CD4-positive, alpha-beta memory T cell (primary cell): ENCODE measurements at regions of chr1 and their contacts with region 1.

Region 1: GRCh38 chr1:52141513-52142219 is at the start of gene ZFYVE9:
- DNase-seq: peak; percentile 61 to 76 (median 70)
- H3K4me3 ChIP-seq: peak within 1 kb of the TSS in 1 of 2 donors; percentile 55
- H3K4me3 Mint-ChIP-seq: peak within 1 kb of the TSS; percentile 87 to 94 (median 91)
- H3K27ac ChIP-seq: peak within 1 kb of the TSS; percentile 58
- H3K27ac Mint-ChIP-seq: peak within 1 kb of the TSS; percentile 53 to 94 (median 86)
- H3K4me1 ChIP-seq: peaks cover 43% of the 10 kb centered on the region
- H3K4me1 Mint-ChIP-seq: peaks cover 32 to 40% (median 35%) of the 10 kb centered on the region in 4 donors
- H3K27me3 ChIP-seq: no peaks in the 10 kb centered on the region
- H3K27me3 Mint-ChIP-seq: no peaks in the 10 kb centered on the region
- total RNA-seq, gene ZFYVE9: 11.0 to 12.8 TPM

Region 2: GRCh38 chr1:52056163-52056936 is 85.3 kb before region 1 on chr1 and contains the start of gene BTF3L4:
- CTCF ChIA-PET with region 1: no interaction called
- POLR2A ChIA-PET with region 1: interaction called, 3 read pairs
- intact Hi-C with region 1: loop called (anchors 2 kb)
- DNase-seq: peak; percentile 89 to 97 (median 91)
- H3K4me3 ChIP-seq: peak within 1 kb of the TSS; percentile 81 to 92
- H3K4me3 Mint-ChIP-seq: peak within 1 kb of the TSS; percentile 98 to 100 (median 98)
- H3K27ac ChIP-seq: peak within 1 kb of the TSS; percentile 88
- H3K27ac Mint-ChIP-seq: peak within 1 kb of the TSS; percentile 84 to 98 (median 97)
- H3K4me1 ChIP-seq: peaks cover 56% of the 10 kb centered on the region
- H3K4me1 Mint-ChIP-seq: peaks cover 36 to 72% (median 57%) of the 10 kb centered on the region in 4 donors
- H3K27me3 ChIP-seq: no peaks in the 10 kb centered on the region
- H3K27me3 Mint-ChIP-seq: no peaks in the 10 kb centered on the region
- total RNA-seq, gene BTF3L4: 30.4 to 34.6 TPM

Region 3: GRCh38 chr1:52127181-52128180 is 14.2 kb before region 1 on chr1:
- CTCF ChIA-PET with region 1: interaction called, 4 read pairs
- POLR2A ChIA-PET with region 1: interaction called, 9 read pairs
- intact Hi-C with region 1: loop called (anchors 2 kb)
- DNase-seq: peak in 4 of 5 donors; percentile 18 to 31 (median 26)
- H3K4me3 ChIP-seq: no peak overlapping the region
- H3K4me3 Mint-ChIP-seq: no peak overlapping the region
- H3K27ac ChIP-seq: no peak overlapping the region
- H3K27ac Mint-ChIP-seq: no peak overlapping the region
- H3K4me1 ChIP-seq: no peaks in the 10 kb centered on the region
- H3K4me1 Mint-ChIP-seq: no peaks in the 10 kb centered on the region
- H3K27me3 ChIP-seq: no peaks in the 10 kb centered on the region
- H3K27me3 Mint-ChIP-seq: peaks cover 10 to 17% of the 10 kb centered on the region in 2 donors

Region 4: GRCh38 chr1:52296345-52296744 is 154.7 kb after region 1 on chr1:
- CTCF ChIA-PET with region 1: interaction called, 10 read pairs
- POLR2A ChIA-PET with region 1: interaction called, 4 read pairs
- intact Hi-C with region 1: loop called (anchors 1 kb)
- DNase-seq: peak in 4 of 5 donors; percentile 23 to 42 (median 27)
- H3K4me3 ChIP-seq: no peak overlapping the region
- H3K4me3 Mint-ChIP-seq: no peak overlapping the region
- H3K27ac ChIP-seq: no peak overlapping the region
- H3K27ac Mint-ChIP-seq: no peak overlapping the region
- H3K4me1 ChIP-seq: no peaks in the 10 kb centered on the region
- H3K4me1 Mint-ChIP-seq: peaks cover 0 to 2% (median 0%) of the 10 kb centered on the region in 4 donors
- H3K27me3 ChIP-seq: no peaks in the 10 kb centered on the region
- H3K27me3 Mint-ChIP-seq: no peaks in the 10 kb centered on the region